ENCODE measurements at regions of chr4 and their contacts with region 1.

Region 1: DNA sequence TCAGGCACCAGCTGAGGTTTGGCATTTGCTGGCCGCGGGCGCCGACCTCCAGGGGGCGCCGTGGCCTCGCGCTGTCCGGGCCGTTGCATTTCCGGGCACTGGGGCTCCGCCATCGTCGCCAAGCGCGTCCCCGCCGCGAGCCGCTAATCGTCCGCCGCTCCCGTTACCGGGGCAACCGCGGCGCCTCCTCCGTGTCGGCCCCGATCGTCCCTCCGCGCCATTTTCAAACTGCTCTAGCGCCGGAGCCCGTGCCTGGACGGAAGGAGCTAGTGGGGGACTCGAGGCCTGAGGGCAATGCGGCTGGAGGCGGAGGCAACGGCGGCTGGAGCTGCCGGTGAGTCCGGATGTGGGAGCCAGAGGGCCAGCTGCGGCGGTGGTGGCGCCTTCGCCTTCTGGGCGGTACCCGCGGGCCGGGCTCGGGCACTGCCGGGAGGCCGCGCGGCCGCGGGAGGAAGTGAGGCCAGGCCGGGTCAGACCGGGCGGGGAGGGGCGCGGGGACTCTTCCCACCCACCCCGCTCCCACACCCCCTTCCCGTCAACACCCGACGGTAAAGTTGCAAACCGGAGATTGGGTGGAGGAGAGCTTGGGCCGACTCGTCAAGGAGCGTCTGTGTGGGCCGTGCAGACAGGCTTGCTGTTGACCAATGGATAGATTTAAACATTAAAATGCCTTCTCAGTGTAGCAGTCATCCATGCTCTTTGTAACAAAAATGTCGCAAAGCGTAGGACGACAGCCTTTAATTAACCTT is at the start of gene CEP135:
- DNase-seq: peak; percentile 72 to 95
- H3K4me3 ChIP-seq: peak within 1 kb of the TSS; percentile 61 to 98
- H3K27ac ChIP-seq: peak within 1 kb of the TSS; percentile 90 to 93
- H3K4me1 ChIP-seq: peaks cover 0 to 15% of the 10 kb centered on the region in 2 donors
- H3K27me3 ChIP-seq: no peaks in the 10 kb centered on the region
- CTCF ChIP-seq: peak; percentile 88 to 94 (median 93)
- total RNA-seq, gene CEP135: 0.53 TPM

Region 2: DNA sequence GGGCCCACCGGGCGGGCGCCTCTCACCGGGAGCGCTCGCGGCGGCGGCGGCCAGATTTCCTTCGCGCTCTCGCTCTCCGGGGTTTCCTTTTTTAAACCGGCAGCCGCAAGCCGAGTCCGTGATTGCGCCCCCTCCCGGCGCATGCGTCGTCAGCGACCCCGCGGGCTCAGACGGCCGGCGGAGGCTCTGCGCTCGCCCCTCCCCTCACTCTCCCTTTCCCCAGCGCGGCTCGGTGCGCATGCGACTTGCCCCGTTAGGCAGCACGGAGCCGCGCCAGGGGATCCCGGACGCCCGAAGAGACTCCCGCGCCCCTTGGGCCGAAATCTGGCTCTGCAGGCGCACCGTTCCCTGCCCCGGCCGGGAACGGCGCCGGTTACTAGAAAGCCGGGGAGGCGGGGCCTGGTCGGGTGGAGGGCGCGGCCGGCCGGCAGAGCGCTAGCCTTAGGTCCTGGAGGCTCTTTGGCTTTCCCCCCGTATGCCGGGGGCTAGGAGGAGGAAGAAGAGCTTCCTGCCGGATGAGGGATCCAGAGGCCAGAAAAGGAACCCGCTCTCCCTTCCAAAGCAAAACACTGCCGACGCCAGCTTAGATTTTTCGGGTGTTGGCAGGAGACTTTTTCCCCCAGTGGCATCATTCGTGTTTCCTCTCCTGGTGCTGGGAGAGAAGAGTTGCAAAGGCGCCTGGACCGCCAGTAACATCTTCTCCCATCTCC is 402.0 kb before region 1 on chr4 and contains the start of gene CLOCK:
- intact Hi-C with region 1: loop called (anchors 5 kb)
- DNase-seq: peak; percentile 39 to 91
- H3K4me3 ChIP-seq: peak within 1 kb of the TSS; percentile 87 to 91
- H3K27ac ChIP-seq: peak within 1 kb of the TSS; percentile 96 to 97
- H3K4me1 ChIP-seq: peaks cover 0 to 18% of the 10 kb centered on the region in 2 donors
- H3K27me3 ChIP-seq: no peaks in the 10 kb centered on the region
- CTCF ChIP-seq: peak; percentile 39 to 58 (median 57)
- total RNA-seq, gene CLOCK: 17.6 TPM

Region 3: GRCh38 chr4:55892156-55892555 is 56.7 kb before region 1 on chr4:
- intact Hi-C with region 1: loop called (anchors 5 kb)
- DNase-seq: no peak
- H3K4me3 ChIP-seq: no peak overlapping the region
- H3K27ac ChIP-seq: no peak overlapping the region
- H3K4me1 ChIP-seq: no peaks in the 10 kb centered on the region
- H3K27me3 ChIP-seq: no peaks in the 10 kb centered on the region
- CTCF ChIP-seq: no peak

Region 4: DNA sequence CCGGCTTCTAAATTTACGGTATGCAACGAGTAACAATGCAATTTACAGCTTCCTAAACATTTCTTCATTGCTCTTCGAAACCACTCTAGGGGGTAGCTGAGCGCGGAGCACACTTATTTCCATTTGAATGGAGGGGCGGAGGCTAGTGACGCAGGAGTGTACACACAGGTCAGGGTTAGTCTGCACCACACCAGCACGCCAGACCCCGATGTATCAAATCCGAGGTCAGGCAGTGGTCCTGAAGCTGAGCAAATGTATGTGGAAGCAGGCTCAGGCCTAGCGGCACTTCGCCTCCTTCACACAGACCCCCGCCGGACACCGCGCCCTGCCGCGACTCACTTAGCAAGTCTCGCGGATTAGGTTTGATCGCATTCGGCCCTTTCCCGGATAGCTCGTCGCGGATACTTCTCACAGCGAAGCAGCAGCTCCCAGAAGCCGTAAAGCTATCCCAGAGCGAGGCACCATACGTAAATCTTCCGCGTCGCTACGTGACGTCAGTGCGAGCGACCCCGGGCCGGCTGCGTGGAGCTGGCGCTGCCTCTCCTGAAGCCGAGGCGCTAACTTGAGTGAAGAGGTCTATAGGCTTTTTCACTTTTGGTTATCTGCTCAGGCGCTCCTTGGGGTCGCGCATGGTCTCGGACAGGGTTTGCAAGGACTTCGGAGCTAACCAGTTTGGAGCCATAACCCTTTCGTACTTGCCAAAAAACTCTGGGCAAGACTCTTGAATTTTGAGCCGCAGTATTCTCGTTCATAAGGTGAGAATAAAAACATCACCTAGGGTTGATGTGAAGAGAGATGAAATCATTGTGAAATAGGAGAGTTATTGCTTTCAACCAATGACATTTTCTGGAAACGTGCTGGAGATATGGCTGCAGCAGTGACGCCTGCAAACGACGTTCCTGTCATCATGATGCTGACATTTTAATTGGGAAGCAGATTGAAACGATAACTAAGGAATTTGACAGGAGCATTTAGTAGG is 438.4 kb after region 1 on chr4 and contains the start of gene AASDH:
- intact Hi-C with region 1: loop called (anchors 5 kb)
- DNase-seq: peak; percentile 59 to 95
- H3K4me3 ChIP-seq: peak within 1 kb of the TSS; percentile 77 to 86
- H3K27ac ChIP-seq: peak within 1 kb of the TSS; percentile 94 to 96
- H3K4me1 ChIP-seq: peaks cover 0 to 5% of the 10 kb centered on the region in 2 donors
- H3K27me3 ChIP-seq: no peaks in the 10 kb centered on the region
- CTCF ChIP-seq: no peak
- total RNA-seq, gene AASDH: 4.0 TPM

Region 5: GRCh38 chr4:56544573-56545131 is 595.8 kb after region 1 on chr4:
- intact Hi-C with region 1: loop called (anchors 5 kb)
- DNase-seq: peak; percentile 14 to 89
- H3K4me3 ChIP-seq: peak overlapping the region; percentile 7 to 60
- H3K27ac ChIP-seq: no peak overlapping the region
- H3K4me1 ChIP-seq: no peaks in the 10 kb centered on the region
- H3K27me3 ChIP-seq: no peaks in the 10 kb centered on the region
- CTCF ChIP-seq: peak; percentile 84 to 99 (median 98)